Activated CD8-positive, alpha-beta memory T cell treated with anti-CD3 and anti-CD28 coated beads, Interleukin-2, amount 10 ng/mL, durations not matched to agents 7 days and 5 days (primary cell): ENCODE measurements at regions of chr1 and their contacts with region 1.

Region 1: GRCh38 chr1:156625436-156626078 is 6.3 kb downstream of the HAPLN2 start:
- DNase-seq: peak; percentile 64
- ATAC-seq: peak; percentile 64
- H3K4me3 Mint-ChIP-seq: no peak overlapping the region
- H3K27ac Mint-ChIP-seq: no peak overlapping the region
- H3K4me1 Mint-ChIP-seq: peaks cover 8% of the 10 kb centered on the region
- H3K27me3 Mint-ChIP-seq: peaks cover 68% of the 10 kb centered on the region

Region 2: GRCh38 chr1:156295391-156295947 is 330.1 kb before region 1 on chr1 and contains the start of gene GLMP:
- CTCF ChIA-PET with region 1: no interaction called
- DNase-seq: peak; percentile 79
- ATAC-seq: peak; percentile 91
- H3K4me3 Mint-ChIP-seq: peak within 1 kb of the TSS; percentile 83
- H3K27ac Mint-ChIP-seq: peak within 1 kb of the TSS; percentile 73
- H3K4me1 Mint-ChIP-seq: peaks cover 18% of the 10 kb centered on the region
- H3K27me3 Mint-ChIP-seq: no peaks in the 10 kb centered on the region
- total RNA-seq, gene GLMP: 24.7 to 28.9 TPM

Region 3: GRCh38 chr1:156601122-156601830 is 24.3 kb before region 1 on chr1 and contains the start of gene GPATCH4:
- CTCF ChIA-PET with region 1: interaction called, 19 read pairs
- DNase-seq: peak; percentile 94
- ATAC-seq: peak; percentile 85
- H3K4me3 Mint-ChIP-seq: peak within 1 kb of the TSS; percentile 99
- H3K27ac Mint-ChIP-seq: peak within 1 kb of the TSS; percentile 98
- H3K4me1 Mint-ChIP-seq: peaks cover 37% of the 10 kb centered on the region
- H3K27me3 Mint-ChIP-seq: no peaks in the 10 kb centered on the region
- total RNA-seq, gene GPATCH4: 40.5 to 50.9 TPM

Region 4: DNA sequence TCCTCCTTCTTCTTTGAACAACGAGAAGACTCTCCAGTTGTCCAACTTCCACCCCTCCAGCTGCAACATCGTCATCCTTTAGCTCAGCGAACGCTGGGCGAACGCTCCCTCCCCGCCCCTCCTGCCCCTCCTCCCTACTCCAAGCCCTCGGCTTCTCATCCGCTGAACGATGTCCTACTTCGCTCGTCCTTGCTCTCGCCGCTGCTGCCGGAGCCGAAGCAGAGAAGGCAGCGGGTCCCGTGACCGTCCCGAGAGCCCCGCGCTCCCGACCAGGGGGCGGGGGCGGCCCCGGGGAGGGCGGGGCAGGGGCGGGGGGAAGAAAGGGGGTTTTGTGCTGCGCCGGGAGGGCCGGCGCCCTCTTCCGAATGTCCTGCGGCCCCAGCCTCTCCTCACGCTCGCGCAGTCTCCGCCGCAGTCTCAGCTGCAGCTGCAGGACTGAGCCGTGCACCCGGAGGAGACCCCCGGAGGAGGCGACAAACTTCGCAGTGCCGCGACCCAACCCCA is 16.3 kb after region 1 on chr1 and contains the start of gene BCAN:
- CTCF ChIA-PET with region 1: interaction called, 344 read pairs
- DNase-seq: no peak
- ATAC-seq: no peak
- H3K4me3 Mint-ChIP-seq: no peak within 1 kb of the TSS
- H3K27ac Mint-ChIP-seq: no peak within 1 kb of the TSS
- H3K4me1 Mint-ChIP-seq: peaks cover 41% of the 10 kb centered on the region
- H3K27me3 Mint-ChIP-seq: peaks cover 90% of the 10 kb centered on the region
- total RNA-seq, gene BCAN: 0.07 TPM in 1 of 2 experiments, not detected in the other

Region 5: GRCh38 chr1:156677616-156678596 is 52.3 kb after region 1 on chr1:
- CTCF ChIA-PET with region 1: interaction called, 170 read pairs
- DNase-seq: no peak
- ATAC-seq: peak; percentile 31
- H3K4me3 Mint-ChIP-seq: no peak overlapping the region
- H3K27ac Mint-ChIP-seq: no peak overlapping the region
- H3K4me1 Mint-ChIP-seq: peaks cover 7% of the 10 kb centered on the region
- H3K27me3 Mint-ChIP-seq: peaks cover 88% of the 10 kb centered on the region